ENCODE measurements at regions of chr22 and their contacts with region 1.

Region 1: DNA sequence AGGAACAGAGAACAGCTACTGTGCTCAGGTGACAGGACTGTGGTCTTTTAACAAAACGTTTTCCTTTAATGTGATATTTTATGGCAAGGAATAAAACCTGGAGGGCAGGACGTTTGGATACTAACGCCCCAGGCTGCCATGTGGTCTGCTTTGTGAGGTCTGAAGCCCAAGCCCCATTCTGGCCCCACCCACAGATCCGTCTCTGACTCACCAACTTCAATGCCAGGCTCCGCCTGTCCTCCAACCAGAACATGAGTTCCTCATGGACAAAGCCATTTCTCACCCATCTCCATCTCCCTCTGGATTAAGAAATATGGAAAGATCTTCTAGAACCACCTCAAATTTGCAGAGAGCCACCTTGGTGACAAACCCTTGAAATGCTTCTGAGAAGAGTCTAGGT is 148.8 kb downstream of the CRYBB2 start:
- DNase-seq: peak; percentile 47 to 77 (median 63)
- H3K4me3 ChIP-seq: no peak overlapping the region
- H3K27ac ChIP-seq: no peak overlapping the region
- H3K4me1 ChIP-seq: peaks cover 0 to 18% of the 10 kb centered on the region in 2 donors
- H3K27me3 ChIP-seq: no peaks in the 10 kb centered on the region
- CTCF ChIP-seq: no peak
- POLR2A ChIP-seq: no peak

Region 2: GRCh38 chr22:25404928-25405816 is 36.9 kb after region 1 on chr22:
- intact Hi-C with region 1: loop called in 1 of 2 experiments (anchors 5 kb)
- DNase-seq: peak; percentile 74 to 83 (median 82)
- H3K4me3 ChIP-seq: peak overlapping the region in 3 of 4 donors; percentile 25 to 100 (median 40)
- H3K27ac ChIP-seq: peak overlapping the region in 4 of 5 donors; percentile 63 to 94 (median 79)
- H3K4me1 ChIP-seq: peaks cover 28 to 44% of the 10 kb centered on the region in 2 donors
- H3K27me3 ChIP-seq: no peaks in the 10 kb centered on the region
- CTCF ChIP-seq: no peak
- POLR2A ChIP-seq: peak; percentile 71 to 91

Measured in adrenal gland (tissue), 19 donors.